ENCODE measurements at regions of chr14 and their contacts with region 1.

Region 1: GRCh38 chr14:81485372-81485771 is 48.3 kb downstream of the SEL1L start:
- DNase-seq: peak in 16 of 35 experiments; percentile 2 to 53 (median 18)
- ATAC-seq: peak in 3 of 4 experiments; percentile 20 to 52 (median 34)
- H3K4me3 ChIP-seq: no peak overlapping the region
- H3K4me3 Mint-ChIP-seq: peak overlapping the region in 1 of 3 donors; percentile 9
- H3K27ac ChIP-seq: peak overlapping the region; percentile 48
- H3K27ac Mint-ChIP-seq: peak overlapping the region; percentile 50 to 83
- H3K4me1 ChIP-seq: peaks cover 0 to 7% of the 10 kb centered on the region in 2 experiments
- H3K4me1 Mint-ChIP-seq: peaks cover 0 to 6% (median 3%) of the 10 kb centered on the region in 3 donors
- H3K27me3 ChIP-seq: no peaks in the 10 kb centered on the region
- H3K27me3 Mint-ChIP-seq: no peaks in the 10 kb centered on the region

Region 2: GRCh38 chr14:79937433-79937832 is 1547.9 kb before region 1 on chr14:
- CTCF ChIA-PET with region 1: no interaction called
- POLR2A ChIA-PET with region 1: no interaction called
- DNase-seq: no peak
- ATAC-seq: no peak
- H3K4me3 ChIP-seq: no peak overlapping the region
- H3K4me3 Mint-ChIP-seq: no peak overlapping the region
- H3K27ac ChIP-seq: no peak overlapping the region
- H3K27ac Mint-ChIP-seq: no peak overlapping the region
- H3K4me1 ChIP-seq: no peaks in the 10 kb centered on the region
- H3K4me1 Mint-ChIP-seq: no peaks in the 10 kb centered on the region
- H3K27me3 ChIP-seq: no peaks in the 10 kb centered on the region
- H3K27me3 Mint-ChIP-seq: no peaks in the 10 kb centered on the region

Region 3: DNA sequence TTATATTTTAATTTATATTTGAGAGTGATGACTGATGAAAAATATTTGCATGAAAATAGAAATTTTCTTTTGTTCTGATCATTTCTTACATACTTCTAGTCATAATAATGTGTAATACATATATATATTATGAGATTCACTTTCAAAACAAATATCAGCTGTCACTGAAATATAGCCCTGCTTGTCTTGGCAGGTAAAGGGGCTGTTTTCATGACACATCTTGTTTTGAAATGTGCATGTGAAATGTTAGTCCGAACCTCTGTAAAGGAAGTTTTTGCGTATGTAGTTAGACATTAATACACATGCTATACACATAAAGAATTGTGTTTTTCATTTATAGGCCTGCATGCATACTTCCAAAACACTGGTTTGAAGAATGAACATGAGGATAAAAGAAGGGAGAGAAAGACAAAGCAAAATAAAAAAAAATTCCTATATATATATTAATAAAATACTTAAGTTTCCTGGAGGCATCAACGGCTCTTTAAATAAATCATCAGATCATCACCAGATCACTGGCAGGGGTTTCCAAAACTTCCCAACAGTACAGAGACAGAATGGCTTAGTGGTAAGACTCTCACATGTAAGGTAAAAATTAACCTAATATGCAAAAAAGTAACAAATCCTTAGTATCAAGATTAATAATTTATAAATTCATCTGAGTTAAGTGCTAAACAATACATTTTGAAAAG is 11.8 kb before region 1 on chr14:
- CTCF ChIA-PET with region 1: no interaction called
- POLR2A ChIA-PET with region 1: interaction called in 1 of 2 experiments, 11 read pairs
- DNase-seq: no peak
- ATAC-seq: peak in 1 of 4 experiments; percentile 26
- H3K4me3 ChIP-seq: no peak overlapping the region
- H3K4me3 Mint-ChIP-seq: peak overlapping the region; percentile 68 to 72 (median 70)
- H3K27ac ChIP-seq: peak overlapping the region; percentile 81
- H3K27ac Mint-ChIP-seq: peak overlapping the region; percentile 91 to 97
- H3K4me1 ChIP-seq: peaks cover 0 to 13% of the 10 kb centered on the region in 2 experiments
- H3K4me1 Mint-ChIP-seq: peaks cover 30 to 44% (median 37%) of the 10 kb centered on the region in 3 donors
- H3K27me3 ChIP-seq: no peaks in the 10 kb centered on the region
- H3K27me3 Mint-ChIP-seq: no peaks in the 10 kb centered on the region

Region 4: DNA sequence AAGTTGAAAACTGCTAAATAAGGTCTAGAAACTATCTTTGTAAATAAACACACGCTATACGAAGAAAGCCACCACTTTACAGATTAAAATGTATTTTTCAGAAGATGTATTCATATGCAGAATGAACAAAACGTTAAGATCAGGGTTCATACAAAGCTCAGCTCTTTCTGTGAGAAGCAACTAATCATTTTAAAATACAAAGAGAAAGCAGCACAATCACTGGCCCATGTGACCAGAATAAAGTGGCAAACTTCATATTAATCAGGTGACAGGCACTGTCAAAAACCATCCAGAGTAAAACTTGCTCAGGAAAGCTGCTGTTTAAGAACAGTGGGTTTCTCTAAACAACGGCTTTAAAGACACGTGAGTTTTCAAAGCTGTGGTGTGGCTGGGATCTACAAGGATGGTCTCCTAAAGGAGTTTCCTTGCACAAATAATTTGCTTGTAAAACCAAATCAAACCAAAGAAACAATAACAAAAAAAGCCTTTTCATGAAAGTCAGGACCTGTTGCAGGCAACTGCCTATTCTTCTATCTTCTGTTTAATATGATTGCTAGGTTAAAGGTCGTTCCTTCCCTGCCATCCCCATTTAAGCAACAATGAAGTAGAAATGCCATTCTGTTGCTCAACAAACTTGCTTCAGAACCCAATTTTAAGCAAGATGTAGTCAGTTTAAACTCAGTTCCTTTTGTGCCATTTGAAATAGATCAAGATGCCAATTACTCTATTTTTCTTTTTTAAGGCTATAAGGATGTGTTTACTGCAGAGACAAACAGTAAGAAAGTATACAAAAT is 25.9 kb after region 1 on chr14:
- CTCF ChIA-PET with region 1: interaction called in 1 of 2 experiments, 3 read pairs
- POLR2A ChIA-PET with region 1: interaction called in 1 of 2 experiments, 11 read pairs
- DNase-seq: no peak
- ATAC-seq: no peak
- H3K4me3 ChIP-seq: no peak overlapping the region
- H3K4me3 Mint-ChIP-seq: no peak overlapping the region
- H3K27ac ChIP-seq: no peak overlapping the region
- H3K27ac Mint-ChIP-seq: peak overlapping the region in 1 of 2 donors; percentile 39
- H3K4me1 ChIP-seq: no peaks in the 10 kb centered on the region
- H3K4me1 Mint-ChIP-seq: peaks cover 37 to 57% (median 56%) of the 10 kb centered on the region in 3 donors
- H3K27me3 ChIP-seq: no peaks in the 10 kb centered on the region
- H3K27me3 Mint-ChIP-seq: no peaks in the 10 kb centered on the region

Region 5: DNA sequence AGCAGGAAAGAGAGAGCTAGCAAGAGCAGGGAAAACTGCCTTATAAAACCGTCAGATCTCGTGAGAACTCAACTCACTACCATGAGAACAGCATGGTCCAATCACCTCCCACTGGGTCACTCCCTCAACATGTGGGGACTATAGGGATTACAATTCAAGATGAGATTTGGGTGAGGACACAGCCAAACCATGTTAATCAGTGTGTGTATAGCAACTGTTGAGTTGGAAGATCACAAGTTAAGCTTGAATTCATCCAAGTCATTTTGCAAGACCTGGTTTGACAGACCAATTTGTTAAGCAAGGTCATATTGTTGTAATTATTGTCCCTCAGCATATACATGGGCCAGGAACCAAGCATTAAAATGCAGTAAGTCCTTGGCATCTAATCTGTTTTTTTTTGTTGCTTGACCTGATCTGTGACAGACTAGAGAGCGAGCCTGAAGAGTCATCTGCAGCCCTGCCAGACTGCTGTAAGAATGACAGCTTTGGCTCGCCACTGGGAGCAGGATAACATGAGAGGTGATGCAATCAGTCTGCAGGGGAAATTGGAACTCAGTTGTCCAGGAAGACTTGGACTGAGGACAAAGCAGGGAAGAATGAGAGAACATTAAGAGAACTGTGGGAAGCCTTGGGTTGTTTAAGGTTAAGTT is 345.9 kb after region 1 on chr14:
- CTCF ChIA-PET with region 1: no interaction called
- POLR2A ChIA-PET with region 1: no interaction called
- DNase-seq: no peak
- ATAC-seq: no peak
- H3K4me3 ChIP-seq: no peak overlapping the region
- H3K4me3 Mint-ChIP-seq: no peak overlapping the region
- H3K27ac ChIP-seq: no peak overlapping the region
- H3K27ac Mint-ChIP-seq: no peak overlapping the region
- H3K4me1 ChIP-seq: no peaks in the 10 kb centered on the region
- H3K4me1 Mint-ChIP-seq: no peaks in the 10 kb centered on the region
- H3K27me3 ChIP-seq: no peaks in the 10 kb centered on the region
- H3K27me3 Mint-ChIP-seq: no peaks in the 10 kb centered on the region